ENCODE measurements at regions of chr5 and their contacts with region 1.

Region 1: GRCh38 chr5:178461004-178461730 is 129.0 kb downstream of the COL23A1 start:
- DNase-seq: peak; percentile 70
- H3K4me3 Mint-ChIP-seq: no peak overlapping the region
- H3K27ac Mint-ChIP-seq: no peak overlapping the region
- H3K4me1 Mint-ChIP-seq: no peaks in the 10 kb centered on the region
- H3K27me3 Mint-ChIP-seq: no peaks in the 10 kb centered on the region

Region 2: DNA sequence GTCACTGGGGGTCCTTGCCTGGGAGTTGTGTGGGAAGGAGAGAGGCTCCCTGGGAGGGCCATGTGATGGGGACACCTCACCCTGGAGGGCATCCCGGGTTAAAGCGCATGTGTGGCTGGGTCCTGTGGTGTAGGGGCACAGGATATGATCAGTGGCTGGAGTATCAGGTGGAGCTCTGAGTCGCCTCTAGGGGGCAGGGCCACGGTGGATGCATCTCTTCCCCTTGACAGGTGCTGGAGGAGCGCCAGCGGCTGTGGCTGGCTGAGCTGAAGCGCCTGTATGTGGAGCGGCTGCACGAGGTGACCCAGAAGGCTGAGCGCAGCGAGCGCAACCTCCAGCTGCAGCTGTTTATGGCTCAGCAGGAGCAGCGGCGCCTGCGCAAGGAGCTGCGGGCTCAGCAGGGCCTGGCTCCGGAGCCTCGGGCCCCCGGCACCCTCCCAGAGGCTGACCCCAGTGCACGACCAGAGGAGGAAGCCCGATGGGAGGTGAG is 340.3 kb before region 1 on chr5:
- CTCF ChIA-PET with region 1: no interaction called
- POLR2A ChIA-PET with region 1: no interaction called
- intact Hi-C with region 1: no loop called
- DNase-seq: peak; percentile 90
- H3K4me3 Mint-ChIP-seq: no peak overlapping the region
- H3K27ac Mint-ChIP-seq: no peak overlapping the region
- H3K4me1 Mint-ChIP-seq: peaks cover 18% of the 10 kb centered on the region
- H3K27me3 Mint-ChIP-seq: no peaks in the 10 kb centered on the region

Region 3: DNA sequence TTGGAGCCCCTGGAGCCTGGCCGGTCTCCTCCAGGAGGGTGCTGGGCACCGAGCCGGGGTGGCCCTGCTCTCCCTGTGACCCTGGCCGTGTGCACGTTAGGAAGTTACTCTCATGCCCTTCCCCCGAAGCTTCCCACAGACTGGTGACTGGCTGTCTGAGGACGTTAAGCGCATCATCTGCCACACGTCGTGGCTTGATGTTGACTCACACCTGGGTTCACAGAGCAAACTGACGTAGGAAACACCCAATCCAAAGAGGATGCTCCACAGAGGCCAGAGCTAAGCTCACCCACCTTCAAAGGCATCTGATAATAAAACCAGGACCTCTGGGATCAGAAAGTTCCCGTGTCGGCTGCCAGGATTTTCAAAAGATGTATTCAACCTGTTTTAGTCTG is 75.7 kb before region 1 on chr5:
- CTCF ChIA-PET with region 1: no interaction called
- POLR2A ChIA-PET with region 1: no interaction called
- intact Hi-C with region 1: no loop called
- DNase-seq: no peak
- H3K4me3 Mint-ChIP-seq: no peak overlapping the region
- H3K27ac Mint-ChIP-seq: no peak overlapping the region
- H3K4me1 Mint-ChIP-seq: no peaks in the 10 kb centered on the region
- H3K27me3 Mint-ChIP-seq: peaks cover 7% of the 10 kb centered on the region

Region 4: GRCh38 chr5:178450121-178451028 is 10.8 kb before region 1 on chr5:
- CTCF ChIA-PET with region 1: interaction called, 10 read pairs
- POLR2A ChIA-PET with region 1: no interaction called
- intact Hi-C with region 1: no loop called
- DNase-seq: no peak
- H3K4me3 Mint-ChIP-seq: no peak overlapping the region
- H3K27ac Mint-ChIP-seq: no peak overlapping the region
- H3K4me1 Mint-ChIP-seq: no peaks in the 10 kb centered on the region
- H3K27me3 Mint-ChIP-seq: peaks cover 15% of the 10 kb centered on the region

Region 5: GRCh38 chr5:178496642-178497041 is 35.5 kb after region 1 on chr5:
- CTCF ChIA-PET with region 1: interaction called, 10 read pairs
- POLR2A ChIA-PET with region 1: no interaction called
- intact Hi-C with region 1: no loop called
- DNase-seq: no peak
- H3K4me3 Mint-ChIP-seq: no peak overlapping the region
- H3K27ac Mint-ChIP-seq: no peak overlapping the region
- H3K4me1 Mint-ChIP-seq: no peaks in the 10 kb centered on the region
- H3K27me3 Mint-ChIP-seq: peaks cover 2% of the 10 kb centered on the region

Region 6: DNA sequence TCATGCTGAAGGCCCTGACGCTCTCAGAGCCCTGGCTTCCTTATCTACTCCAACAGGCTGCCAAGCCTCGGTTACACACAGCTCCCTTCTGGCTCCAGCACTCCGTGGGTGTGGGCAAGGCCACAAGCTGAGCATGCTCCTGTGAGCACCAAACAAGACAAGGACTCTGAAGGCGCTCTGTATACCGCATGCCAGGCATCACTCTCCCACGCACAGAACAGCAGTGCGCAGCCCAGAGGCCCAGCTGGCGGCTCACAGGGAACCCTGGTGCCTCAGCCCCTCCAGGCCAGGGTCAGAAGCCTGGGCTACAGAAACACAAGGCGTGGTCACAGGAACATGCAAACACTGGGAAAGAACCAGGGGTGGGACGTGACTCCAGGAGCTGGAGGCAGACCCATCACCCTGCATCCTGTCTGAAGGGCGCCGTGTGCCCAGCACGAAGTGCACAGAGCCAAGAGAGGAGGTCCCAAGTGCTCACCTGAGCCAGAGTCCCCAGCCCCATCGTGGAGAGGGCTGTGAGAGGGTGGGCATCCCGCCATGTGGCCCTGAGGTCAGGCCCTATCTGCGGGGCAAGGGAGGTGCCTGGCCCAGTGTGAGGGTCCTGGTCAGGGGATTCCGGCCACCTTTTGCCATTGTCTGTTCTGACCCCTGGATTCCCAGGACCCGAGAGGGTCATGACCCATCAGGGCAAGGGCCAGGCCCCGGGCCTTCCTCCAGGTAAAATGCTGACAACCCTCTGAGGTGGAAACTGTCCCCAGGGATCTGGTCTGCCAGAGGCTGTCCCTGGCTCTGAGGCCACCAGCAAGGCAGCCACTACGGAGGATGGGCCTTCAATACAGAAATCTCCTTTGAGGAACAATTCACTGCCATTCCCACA is 74.4 kb after region 1 on chr5:
- CTCF ChIA-PET with region 1: no interaction called
- POLR2A ChIA-PET with region 1: no interaction called
- intact Hi-C with region 1: no loop called
- DNase-seq: no peak
- H3K4me3 Mint-ChIP-seq: no peak overlapping the region
- H3K27ac Mint-ChIP-seq: no peak overlapping the region
- H3K4me1 Mint-ChIP-seq: no peaks in the 10 kb centered on the region
- H3K27me3 Mint-ChIP-seq: no peaks in the 10 kb centered on the region

Measured in activated CD4-positive, alpha-beta memory T cell treated with anti-CD3 and anti-CD28 coated beads for 36 hours (primary cell).